ENCODE measurements at regions of chr11 and their contacts with region 1.

Region 1: DNA sequence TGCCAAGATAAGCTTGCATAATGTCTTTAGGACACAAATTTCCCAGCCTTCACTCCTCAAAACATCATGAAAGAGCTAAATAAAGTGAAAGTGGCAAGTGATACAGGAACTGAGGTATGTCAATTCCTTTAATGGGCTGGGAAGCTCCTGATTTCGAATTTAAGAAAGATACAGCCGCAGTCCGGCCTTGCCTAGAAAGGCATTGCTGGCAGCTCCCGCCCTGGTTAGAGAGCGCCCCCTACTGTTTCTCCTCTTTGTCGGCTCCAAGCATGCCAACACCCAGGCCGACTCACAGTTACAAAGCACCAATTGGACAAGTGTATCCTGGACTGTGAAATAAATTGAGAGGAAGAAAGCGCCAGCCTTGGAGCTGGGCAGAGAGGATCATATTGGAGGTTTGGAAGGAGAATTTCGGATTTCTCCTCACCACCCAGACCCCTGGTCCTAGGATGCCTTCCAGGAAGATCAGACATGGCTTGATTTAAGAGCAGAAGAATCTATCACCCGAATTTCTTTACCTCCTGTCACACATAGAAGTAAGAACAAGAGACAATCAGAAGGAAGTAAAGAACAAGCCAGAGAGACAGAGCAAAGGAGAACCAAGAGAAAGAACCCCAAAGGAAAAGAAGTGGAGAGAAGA is 84.0 kb downstream of the FAM76B start:
- DNase-seq: peak; percentile 47
- H3K4me3 ChIP-seq: no peak overlapping the region
- H3K27ac ChIP-seq: peak overlapping the region in 3 of 4 donors; percentile 57 to 65 (median 64)
- H3K4me1 ChIP-seq: peaks cover 5 to 56% (median 16%) of the 10 kb centered on the region in 3 donors
- H3K27me3 ChIP-seq: no peaks in the 10 kb centered on the region
- CTCF ChIP-seq: peak; percentile 92 to 97 (median 95)
- POLR2A ChIP-seq: no peak

Region 2: GRCh38 chr11:95150946-95151684 is 554.5 kb before region 1 on chr11:
- intact Hi-C with region 1: loop called (anchors 10 kb)
- DNase-seq: peak; percentile 68
- H3K4me3 ChIP-seq: peak overlapping the region; percentile 45 to 66 (median 64)
- H3K27ac ChIP-seq: peak overlapping the region; percentile 89 to 94 (median 93)
- H3K4me1 ChIP-seq: peaks cover 8 to 67% (median 25%) of the 10 kb centered on the region in 3 donors
- H3K27me3 ChIP-seq: no peaks in the 10 kb centered on the region
- CTCF ChIP-seq: peak; percentile 68 to 97 (median 95)
- POLR2A ChIP-seq: peak in 3 of 4 donors; percentile 5 to 81 (median 42)

Region 3: DNA sequence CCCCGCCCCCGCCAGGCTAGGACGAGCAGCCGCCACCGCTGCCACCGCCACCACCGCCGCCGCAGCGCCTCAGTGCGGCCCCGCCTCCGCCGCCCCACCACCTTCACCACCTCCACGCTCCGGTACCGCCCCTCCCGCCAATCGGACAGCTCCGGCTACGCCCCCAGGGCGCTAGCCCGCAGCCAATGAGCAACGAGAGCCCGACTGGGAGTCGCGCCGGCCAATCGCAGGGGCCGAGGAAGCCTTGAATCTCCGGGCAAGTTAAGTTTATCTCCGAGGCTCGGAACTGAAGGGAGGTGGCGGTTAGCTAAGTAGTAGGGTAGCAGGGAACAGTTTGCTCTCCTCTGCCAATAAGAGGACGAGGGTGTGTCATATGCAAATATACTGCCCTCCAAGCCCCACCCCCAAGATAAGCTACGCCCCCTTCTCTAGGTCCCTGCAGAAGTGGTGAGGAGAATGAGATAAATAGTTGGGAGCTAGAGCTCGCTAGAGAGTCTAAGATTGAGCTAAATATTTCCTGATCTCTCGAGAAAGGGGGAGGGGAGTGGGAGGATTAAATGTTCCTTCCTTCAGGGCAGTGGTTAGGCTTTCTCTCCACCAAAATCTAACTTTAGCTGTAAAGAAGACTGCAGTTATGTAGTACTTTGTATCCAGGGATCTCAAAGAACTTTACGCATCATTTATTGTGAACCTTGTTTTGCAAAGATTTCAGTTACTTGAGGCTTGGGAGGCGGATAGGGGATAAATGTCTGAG is 474.3 kb before region 1 on chr11 and contains the start of gene SESN3:
- intact Hi-C with region 1: loop called (anchors 10 kb)
- DNase-seq: peak; percentile 97
- H3K4me3 ChIP-seq: peak within 1 kb of the TSS; percentile 87 to 97 (median 92)
- H3K27ac ChIP-seq: peak within 1 kb of the TSS; percentile 94 to 96 (median 96)
- H3K4me1 ChIP-seq: peaks cover 8 to 64% (median 13%) of the 10 kb centered on the region in 3 donors
- H3K27me3 ChIP-seq: no peaks in the 10 kb centered on the region
- CTCF ChIP-seq: peak in 2 of 6 experiments; percentile 22 to 32
- POLR2A ChIP-seq: peak in 3 of 4 donors; percentile 43 to 80 (median 51)
- total RNA-seq, gene SESN3: 11.3 to 33.7 (median 22.1) TPM

Region 4: DNA sequence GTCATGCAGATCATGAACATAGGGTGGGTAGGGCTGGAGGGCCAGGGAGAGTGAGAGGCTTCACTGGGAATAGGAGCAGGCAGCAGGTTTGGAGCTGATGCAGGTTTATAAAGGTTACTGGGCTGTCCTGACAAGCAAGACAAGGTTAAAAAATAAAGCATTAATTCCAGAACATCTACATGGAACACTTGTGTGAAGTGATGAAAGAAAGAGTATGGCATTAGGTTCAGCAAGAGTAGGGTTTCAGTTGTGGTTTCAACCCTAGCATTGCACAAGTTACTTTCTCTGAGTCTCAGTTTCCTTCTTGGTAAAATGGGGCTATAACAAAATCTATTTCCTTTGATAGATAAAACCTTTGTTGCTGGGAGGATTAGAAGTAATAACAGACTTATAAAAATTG is 360.0 kb before region 1 on chr11:
- intact Hi-C with region 1: loop called (anchors 10 kb)
- DNase-seq: no peak
- H3K4me3 ChIP-seq: no peak overlapping the region
- H3K27ac ChIP-seq: peak overlapping the region in 1 of 4 donors; percentile 36
- H3K4me1 ChIP-seq: peaks cover 5 to 42% (median 10%) of the 10 kb centered on the region in 3 donors
- H3K27me3 ChIP-seq: no peaks in the 10 kb centered on the region
- CTCF ChIP-seq: no peak
- POLR2A ChIP-seq: no peak

Region 5: DNA sequence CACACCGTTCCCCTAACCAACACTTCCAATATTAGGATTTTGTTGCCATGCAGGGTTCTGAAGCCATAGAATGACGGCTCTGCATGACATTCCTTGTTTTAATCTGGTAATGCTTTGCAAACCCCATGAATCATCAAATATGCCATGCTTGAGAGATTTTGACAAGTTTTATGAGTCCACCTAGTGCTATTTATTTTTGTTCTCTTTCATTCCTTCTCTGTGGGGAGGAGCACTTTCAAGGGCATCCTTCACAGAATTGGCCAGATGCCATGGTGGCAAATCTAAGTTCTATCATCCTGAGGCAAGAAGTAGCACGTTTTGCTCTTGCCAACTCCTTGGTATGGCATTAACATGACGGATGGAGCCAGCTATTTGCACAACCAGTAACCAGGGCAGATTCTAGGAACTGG is 184.5 kb before region 1 on chr11:
- intact Hi-C with region 1: loop called (anchors 10 kb)
- DNase-seq: no peak
- H3K4me3 ChIP-seq: no peak overlapping the region
- H3K27ac ChIP-seq: peak overlapping the region in 2 of 4 donors; percentile 37 to 46
- H3K4me1 ChIP-seq: peaks cover 4 to 45% (median 4%) of the 10 kb centered on the region in 3 donors
- H3K27me3 ChIP-seq: peaks cover 0 to 3% (median 0%) of the 10 kb centered on the region in 4 donors
- CTCF ChIP-seq: no peak
- POLR2A ChIP-seq: no peak

Region 6: DNA sequence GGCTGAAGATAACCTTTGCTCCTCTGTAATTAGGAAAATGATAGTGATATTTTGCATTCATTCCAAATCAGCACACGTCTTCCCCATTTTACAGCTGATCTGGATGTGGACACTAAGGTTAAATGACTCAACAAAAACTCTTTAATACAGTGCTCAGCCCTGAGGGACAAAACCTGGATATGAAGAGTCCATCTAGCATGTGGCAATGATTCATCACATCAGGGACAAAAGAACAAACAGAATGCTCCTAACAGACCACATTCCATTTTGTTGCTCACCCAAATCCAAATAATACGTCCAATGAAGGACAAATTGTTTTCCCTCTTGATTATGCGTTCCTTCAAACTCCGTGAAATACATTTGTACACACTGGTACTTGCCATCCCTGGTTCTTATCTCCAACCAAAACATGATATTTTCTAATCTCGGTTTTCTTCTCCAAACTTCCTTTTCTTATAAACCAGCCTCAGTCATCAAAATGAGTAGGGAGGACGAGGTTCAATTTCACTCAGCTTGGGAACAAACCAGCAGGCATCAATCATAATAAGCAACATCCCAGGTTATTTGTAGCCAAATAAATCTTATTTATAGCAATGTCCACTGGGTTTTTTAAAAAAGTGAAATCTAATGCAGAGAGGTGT is 272.0 kb after region 1 on chr11:
- intact Hi-C with region 1: no loop called
- DNase-seq: no peak
- H3K4me3 ChIP-seq: no peak overlapping the region
- H3K27ac ChIP-seq: no peak overlapping the region
- H3K4me1 ChIP-seq: no peaks in the 10 kb centered on the region
- H3K27me3 ChIP-seq: no peaks in the 10 kb centered on the region
- CTCF ChIP-seq: no peak
- POLR2A ChIP-seq: no peak